Motor neuron (in vitro differentiated cells): ENCODE measurements at regions of chr17 and their contacts with region 1.

Region 1: DNA sequence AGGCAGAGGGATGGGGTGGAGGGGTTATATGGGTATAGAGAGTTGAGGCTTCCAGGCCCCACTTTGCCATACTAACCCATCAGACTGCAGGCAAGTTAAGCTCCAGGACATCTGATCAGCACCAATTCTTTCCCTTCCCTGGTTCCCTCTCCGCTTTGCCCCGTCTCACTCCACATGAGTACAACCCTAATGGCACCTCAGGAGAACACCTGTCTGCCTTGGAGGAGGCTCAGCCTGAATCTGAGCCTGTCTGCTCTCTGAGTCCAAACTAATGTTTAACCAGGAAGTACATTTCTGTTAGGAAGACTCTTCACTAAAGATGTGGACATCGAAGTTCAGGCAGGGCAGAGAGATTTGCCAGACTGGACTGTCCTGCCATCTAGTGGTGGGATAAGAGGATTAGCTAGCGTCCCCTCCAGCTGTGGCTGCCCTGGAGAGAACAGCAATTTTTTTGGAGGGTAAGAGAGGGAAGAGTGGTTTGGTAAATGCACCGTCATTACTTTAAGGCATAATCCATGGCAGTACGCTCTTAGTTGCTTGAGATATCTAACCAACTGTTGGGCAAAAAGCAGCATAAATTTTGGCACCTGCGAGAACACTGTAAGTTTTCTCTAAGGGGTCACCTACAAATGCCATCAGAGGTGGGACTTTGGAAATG is 29.2 kb upstream of the LRRC75A start:
- ATAC-seq: peak; percentile 61 to 96 (median 74)
- H3K4me3 ChIP-seq: no peak overlapping the region
- H3K27ac ChIP-seq: no peak overlapping the region
- H3K4me1 ChIP-seq: peaks cover 9 to 11% of the 10 kb centered on the region in 2 donors

Region 2: DNA sequence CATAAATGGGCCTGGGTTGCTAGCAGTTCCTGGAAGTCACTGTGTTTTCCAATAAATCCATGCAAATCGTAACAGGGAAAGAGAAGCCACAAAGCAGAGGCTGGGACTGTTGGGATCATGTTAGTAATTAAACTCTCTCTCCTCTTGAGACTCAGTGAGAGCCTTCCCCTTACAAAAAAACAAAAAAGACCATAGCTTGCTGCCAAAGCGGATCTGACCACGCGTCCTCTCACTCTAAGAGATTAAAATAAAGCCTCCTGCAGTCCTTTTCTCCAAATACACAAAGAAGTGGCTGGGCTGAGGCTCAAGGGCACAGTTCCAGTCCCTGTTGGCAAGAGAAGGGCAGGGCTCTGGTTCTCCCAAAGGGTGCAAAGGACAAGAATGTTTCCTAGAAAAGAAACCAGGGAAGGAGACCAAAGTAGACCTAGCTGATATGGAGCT is 265.7 kb before region 1 on chr17:
- in situ Hi-C with region 1: no loop called
- ATAC-seq: peak in 6 of 8 experiments; percentile 39 to 89 (median 62)
- H3K4me3 ChIP-seq: no peak overlapping the region
- H3K27ac ChIP-seq: no peak overlapping the region
- H3K4me1 ChIP-seq: peaks cover 0 to 4% of the 10 kb centered on the region in 2 donors

Region 3: GRCh38 chr17:16329519-16330271 is 191.5 kb before region 1 on chr17:
- in situ Hi-C with region 1: no loop called
- ATAC-seq: peak in 5 of 8 experiments; percentile 9 to 57 (median 25)
- H3K4me3 ChIP-seq: no peak overlapping the region
- H3K27ac ChIP-seq: no peak overlapping the region
- H3K4me1 ChIP-seq: no peaks in the 10 kb centered on the region

Region 4: GRCh38 chr17:16363749-16364536 is 157.3 kb before region 1 on chr17:
- in situ Hi-C with region 1: loop called in 2 of 9 experiments (anchors 10 to 25 kb)
- ATAC-seq: peak; percentile 77 to 96 (median 86)
- H3K4me3 ChIP-seq: no peak overlapping the region
- H3K27ac ChIP-seq: no peak overlapping the region
- H3K4me1 ChIP-seq: no peaks in the 10 kb centered on the region

Region 5: GRCh38 chr17:16380640-16381495 is 140.3 kb before region 1 on chr17 and contains the start of gene UBB:
- in situ Hi-C with region 1: loop called in 1 of 9 experiments (anchors 25 kb)
- ATAC-seq: peak; percentile 91 to 96 (median 94)
- H3K4me3 ChIP-seq: peak within 1 kb of the TSS; percentile 42 to 72 (median 52)
- H3K27ac ChIP-seq: peak within 1 kb of the TSS; percentile 96 to 99
- H3K4me1 ChIP-seq: peaks cover 5 to 8% of the 10 kb centered on the region in 2 donors
- total RNA-seq, gene UBB: 1,301 to 2,415 (median 1,636) TPM

Region 6: DNA sequence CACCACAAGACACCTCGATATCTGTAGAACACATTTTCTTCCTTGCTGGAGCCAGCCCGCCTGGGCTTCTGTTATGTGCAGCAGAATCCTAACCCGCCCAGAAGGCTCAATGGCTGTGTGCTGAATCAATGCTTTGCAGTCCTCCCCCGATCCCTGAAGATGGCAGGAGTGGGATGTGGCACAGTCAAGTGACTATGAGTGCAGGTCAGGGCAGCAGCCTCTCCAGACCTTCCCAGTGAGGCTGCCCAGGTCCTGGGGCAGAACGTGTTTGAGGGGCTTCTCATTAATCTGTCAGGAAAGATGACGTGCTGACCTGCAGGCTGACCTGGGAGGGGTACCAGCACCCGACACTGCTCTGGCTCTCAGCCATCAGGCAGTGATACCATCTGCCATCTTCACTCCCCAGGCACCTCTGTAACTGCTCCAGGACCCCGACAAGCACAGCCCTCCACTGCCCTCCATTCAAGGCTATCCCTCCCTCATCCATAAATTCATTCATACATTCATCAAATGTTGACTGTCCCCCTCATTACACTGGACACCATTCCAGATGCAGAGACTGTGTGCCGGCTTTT is 64.4 kb before region 1 on chr17:
- in situ Hi-C with region 1: loop called in 2 of 9 experiments (anchors 5 to 10 kb)
- ATAC-seq: peak in 6 of 8 experiments; percentile 19 to 76 (median 65)
- H3K4me3 ChIP-seq: no peak overlapping the region
- H3K27ac ChIP-seq: peak overlapping the region in 1 of 2 donors; percentile 12
- H3K4me1 ChIP-seq: peaks cover 8 to 11% of the 10 kb centered on the region in 2 donors